ENCODE measurements at regions of chr1 and their contacts with region 1.

Region 1: DNA sequence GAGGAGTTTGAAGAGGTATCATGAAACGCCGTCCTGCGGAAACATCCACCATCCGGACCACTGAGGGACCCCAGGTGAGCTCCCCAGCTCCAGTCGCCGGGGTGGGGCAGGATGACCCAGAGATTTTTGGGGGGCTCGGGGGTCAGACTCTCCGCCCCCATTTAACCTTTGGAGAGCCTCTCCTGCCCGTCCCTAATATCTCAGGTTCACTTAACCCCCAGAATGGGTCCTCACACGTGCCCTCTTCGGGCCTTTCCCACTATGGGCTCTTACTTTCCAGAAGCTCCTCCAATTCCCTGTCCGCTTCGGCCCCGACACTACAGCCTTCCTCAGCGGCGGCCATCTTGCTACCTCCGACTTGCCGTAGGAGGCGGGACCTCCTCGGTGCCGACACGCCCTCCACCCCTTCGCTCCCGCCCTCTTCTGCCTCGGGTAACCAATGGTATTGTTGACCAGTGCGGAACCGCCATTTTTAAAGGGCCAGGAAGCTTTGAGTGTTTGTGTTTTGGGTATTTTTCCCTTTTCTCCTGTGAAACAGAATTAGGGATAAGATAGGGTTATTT is at the start of gene PEX19:
- DNase-seq: peak; percentile 96
- H3K4me3 Mint-ChIP-seq: peak within 1 kb of the TSS; percentile 100
- H3K27ac Mint-ChIP-seq: peak within 1 kb of the TSS; percentile 91
- H3K4me1 Mint-ChIP-seq: peaks cover 21% of the 10 kb centered on the region
- H3K27me3 Mint-ChIP-seq: no peaks in the 10 kb centered on the region
- total RNA-seq, gene PEX19: 53.8 to 60.8 TPM

Region 2: GRCh38 chr1:160205242-160206035 is 79.4 kb before region 1 on chr1 and contains the start of gene PEA15:
- CTCF ChIA-PET with region 1: no interaction called
- POLR2A ChIA-PET with region 1: interaction called, 10 read pairs
- DNase-seq: peak; percentile 76
- H3K4me3 Mint-ChIP-seq: peak within 1 kb of the TSS; percentile 86
- H3K27ac Mint-ChIP-seq: peak within 1 kb of the TSS; percentile 81
- H3K4me1 Mint-ChIP-seq: peaks cover 44% of the 10 kb centered on the region
- H3K27me3 Mint-ChIP-seq: no peaks in the 10 kb centered on the region
- total RNA-seq, gene PEA15: 38.2 to 39.3 TPM

Region 3: GRCh38 chr1:160307118-160307854 is 22.4 kb after region 1 on chr1:
- CTCF ChIA-PET with region 1: no interaction called
- POLR2A ChIA-PET with region 1: interaction called, 10 read pairs
- DNase-seq: no peak
- H3K4me3 Mint-ChIP-seq: no peak overlapping the region
- H3K27ac Mint-ChIP-seq: no peak overlapping the region
- H3K4me1 Mint-ChIP-seq: no peaks in the 10 kb centered on the region
- H3K27me3 Mint-ChIP-seq: no peaks in the 10 kb centered on the region

Measured in activated CD4-positive, alpha-beta memory T cell treated with anti-CD3 and anti-CD28 coated beads, Interleukin-2, amount 10 ng/mL, durations not matched to agents 7 days and 5 days (primary cell).